Prostate gland (tissue), 2 donors: ENCODE measurements at regions of chr2 and their contacts with region 1.

Region 1: DNA sequence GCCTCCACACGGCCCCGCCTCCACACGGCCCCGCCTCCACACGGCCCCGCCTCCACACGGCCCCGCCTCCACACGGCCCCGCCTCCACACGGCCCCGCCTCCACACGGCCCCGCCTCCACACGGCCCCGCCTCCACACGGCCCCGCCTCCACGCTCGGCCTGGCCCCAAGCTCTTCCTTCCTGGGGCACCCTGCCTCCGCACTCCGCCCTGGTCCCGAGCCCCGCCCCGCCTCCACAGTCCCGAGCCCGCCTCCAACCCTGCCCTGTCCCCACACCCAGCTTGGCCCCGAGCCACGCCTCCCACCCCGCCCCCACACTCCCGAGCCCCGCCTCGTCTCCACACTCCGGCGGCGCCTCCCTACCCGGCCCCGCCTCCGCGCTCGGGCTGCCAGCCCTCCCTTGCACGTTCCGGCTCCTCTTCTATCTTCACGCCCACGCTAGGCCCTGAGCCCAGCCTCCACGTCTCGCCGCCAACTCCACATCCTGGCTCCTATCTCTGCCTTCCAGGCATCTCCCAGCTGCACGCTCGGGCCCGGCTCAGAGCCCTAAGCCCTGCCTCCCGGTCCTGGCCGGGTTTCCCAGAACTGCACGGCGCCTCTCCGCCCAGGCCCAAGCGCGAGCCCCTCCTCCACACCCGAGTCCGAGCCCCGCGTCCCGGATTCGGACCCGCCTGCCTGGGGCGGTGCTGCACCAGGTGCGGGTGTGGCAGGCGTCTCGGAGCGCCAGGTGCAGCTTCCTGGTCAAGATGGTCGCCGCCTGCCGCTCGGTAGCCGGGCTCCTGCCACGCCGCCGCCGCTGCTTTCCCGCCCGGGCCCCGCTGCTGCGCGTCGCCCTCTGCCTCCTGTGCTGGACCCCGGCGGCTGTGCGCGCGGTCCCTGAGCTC is at the start of gene TMEM87B:
- DNase-seq: peak; percentile 98
- H3K4me3 ChIP-seq: peak within 1 kb of the TSS; percentile 90 to 95
- H3K27ac ChIP-seq: peak within 1 kb of the TSS; percentile 93 to 96
- H3K4me1 ChIP-seq: peaks cover 13% of the 10 kb centered on the region
- H3K27me3 ChIP-seq: no peaks in the 10 kb centered on the region
- CTCF ChIP-seq: no peak
- POLR2A ChIP-seq: peak; percentile 71
- total RNA-seq, gene TMEM87B: 21.5 to 60.7 TPM

Region 2: GRCh38 chr2:111897924-111898702 is 157.0 kb before region 1 on chr2 and contains the start of gene MERTK:
- intact Hi-C with region 1: loop called (anchors 2 kb)
- DNase-seq: peak; percentile 90
- H3K4me3 ChIP-seq: peak within 1 kb of the TSS; percentile 86 to 93
- H3K27ac ChIP-seq: peak within 1 kb of the TSS; percentile 92 to 96
- H3K4me1 ChIP-seq: peaks cover 10% of the 10 kb centered on the region
- H3K27me3 ChIP-seq: no peaks in the 10 kb centered on the region
- CTCF ChIP-seq: peak; percentile 51 to 86 (median 80)
- POLR2A ChIP-seq: peak; percentile 73
- total RNA-seq, gene MERTK: 22.2 to 43.6 TPM

Region 3: DNA sequence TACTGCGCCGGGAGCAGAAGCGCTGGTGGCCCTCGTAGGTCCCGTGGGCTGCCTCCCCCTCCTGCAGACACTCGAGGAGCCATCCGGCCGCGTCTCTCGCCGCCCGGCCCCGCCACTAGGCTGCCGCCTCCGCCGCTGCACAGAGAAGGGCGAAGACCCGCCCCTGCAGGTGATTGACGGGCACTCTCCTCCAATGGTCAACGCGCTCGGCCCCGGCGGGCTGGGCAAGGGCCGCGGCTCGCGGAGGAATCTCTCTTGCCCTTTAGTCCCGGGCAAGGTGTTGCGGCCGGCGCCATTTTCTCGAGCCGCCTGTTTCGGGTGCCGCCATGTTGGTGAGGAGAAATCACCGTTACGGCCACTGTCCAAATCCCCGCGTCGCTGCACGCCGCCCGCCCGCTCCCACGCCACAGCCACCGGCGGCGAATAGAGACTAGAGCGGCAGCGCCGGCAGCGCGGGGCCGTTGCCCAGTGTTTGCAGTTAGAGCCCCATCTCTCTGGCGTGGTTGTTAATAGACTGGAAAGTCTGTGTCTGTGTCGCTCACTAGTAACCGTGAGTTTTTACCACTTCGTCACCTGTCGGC is 220.3 kb after region 1 on chr2 and contains the start of gene ZC3H6:
- intact Hi-C with region 1: loop called (anchors 5 kb)
- DNase-seq: peak; percentile 98
- H3K4me3 ChIP-seq: peak within 1 kb of the TSS; percentile 95 to 98
- H3K27ac ChIP-seq: peak within 1 kb of the TSS; percentile 100
- H3K4me1 ChIP-seq: no peaks in the 10 kb centered on the region
- H3K27me3 ChIP-seq: no peaks in the 10 kb centered on the region
- CTCF ChIP-seq: peak; percentile 16 to 70 (median 42)
- POLR2A ChIP-seq: peak; percentile 93
- total RNA-seq, gene ZC3H6: 10.2 to 10.5 TPM

Region 4: DNA sequence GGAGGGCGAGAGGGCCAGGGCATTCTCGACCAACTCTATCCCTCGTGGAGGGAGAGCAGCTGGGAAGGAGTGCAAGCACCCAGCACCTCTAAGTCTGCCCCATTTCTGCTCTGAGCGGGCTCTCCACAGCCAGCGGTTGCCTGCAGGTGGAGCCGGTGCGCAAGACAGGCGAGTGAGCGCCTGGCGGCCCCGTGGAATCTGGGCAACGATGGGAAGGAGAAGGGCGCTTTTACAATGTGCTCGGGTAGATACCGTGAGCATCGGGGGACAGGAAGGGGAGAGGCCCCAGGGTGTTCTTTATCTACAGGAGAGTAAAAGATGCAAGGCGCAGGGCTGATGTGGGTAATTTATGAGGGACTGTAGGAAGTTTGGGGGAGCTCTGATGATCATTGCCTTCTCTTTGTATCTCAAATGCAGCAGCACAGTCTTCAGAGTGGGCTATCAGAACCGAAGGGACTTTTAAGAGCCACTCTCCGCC is 426.0 kb after region 1 on chr2:
- intact Hi-C with region 1: loop called (anchors 5 kb)
- DNase-seq: peak; percentile 77
- H3K4me3 ChIP-seq: peak overlapping the region; percentile 60 to 78
- H3K27ac ChIP-seq: peak overlapping the region; percentile 79 to 89
- H3K4me1 ChIP-seq: no peaks in the 10 kb centered on the region
- H3K27me3 ChIP-seq: no peaks in the 10 kb centered on the region
- CTCF ChIP-seq: peak in 3 of 4 experiments; percentile 53 to 76 (median 73)
- POLR2A ChIP-seq: no peak